ENCODE measurements at regions of chr5 and their contacts with region 1.

Region 1: DNA sequence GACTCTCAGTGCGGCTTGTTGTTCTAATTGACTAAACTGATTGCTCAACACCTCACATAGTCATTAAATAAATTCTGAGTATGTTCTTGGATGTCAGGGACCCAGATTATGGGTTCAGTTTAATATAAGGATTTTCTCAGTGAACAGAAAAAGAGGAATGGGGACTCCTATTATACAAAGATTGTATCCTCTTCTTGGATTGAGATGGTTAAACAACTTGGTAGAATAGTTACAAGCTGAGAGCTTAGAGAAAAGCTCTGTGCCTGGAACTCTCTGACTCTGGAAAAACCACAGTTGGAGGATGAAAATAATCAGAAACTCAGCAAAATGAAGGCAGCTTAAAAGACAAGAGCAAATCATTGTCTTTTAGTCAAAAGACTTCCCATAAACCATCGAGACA is 30.5 kb downstream of the ANKRA2 start:
- DNase-seq: no peak
- H3K4me3 ChIP-seq: no peak overlapping the region
- H3K27ac ChIP-seq: no peak overlapping the region
- H3K4me1 ChIP-seq: no peaks in the 10 kb centered on the region
- CTCF ChIP-seq: no peak

Region 2: DNA sequence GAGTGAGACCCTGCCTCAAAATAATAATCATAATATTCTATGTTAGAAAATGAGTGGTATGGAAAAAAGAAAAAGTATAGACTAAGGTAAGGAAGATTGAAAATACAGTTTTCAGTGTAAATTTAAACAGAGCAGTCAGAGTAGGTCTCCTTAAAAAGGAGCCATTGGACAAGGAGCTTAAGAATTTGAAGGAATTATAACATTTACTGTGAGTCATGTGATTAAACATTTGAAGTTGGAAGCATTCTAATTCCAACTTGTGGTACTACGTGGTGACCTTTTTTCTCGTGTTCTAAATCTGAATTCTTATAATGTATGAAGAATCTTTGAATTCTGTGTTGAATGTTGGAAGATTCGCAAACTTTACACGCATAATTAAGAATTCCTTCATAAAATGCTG is 453.9 kb before region 1 on chr5:
- CTCF ChIA-PET with region 1: no interaction called
- POLR2A ChIA-PET with region 1: no interaction called
- intact Hi-C with region 1: loop called (anchors 5 kb)
- DNase-seq: no peak
- H3K4me3 ChIP-seq: no peak overlapping the region
- H3K27ac ChIP-seq: no peak overlapping the region
- H3K4me1 ChIP-seq: no peaks in the 10 kb centered on the region
- CTCF ChIP-seq: no peak

Region 3: DNA sequence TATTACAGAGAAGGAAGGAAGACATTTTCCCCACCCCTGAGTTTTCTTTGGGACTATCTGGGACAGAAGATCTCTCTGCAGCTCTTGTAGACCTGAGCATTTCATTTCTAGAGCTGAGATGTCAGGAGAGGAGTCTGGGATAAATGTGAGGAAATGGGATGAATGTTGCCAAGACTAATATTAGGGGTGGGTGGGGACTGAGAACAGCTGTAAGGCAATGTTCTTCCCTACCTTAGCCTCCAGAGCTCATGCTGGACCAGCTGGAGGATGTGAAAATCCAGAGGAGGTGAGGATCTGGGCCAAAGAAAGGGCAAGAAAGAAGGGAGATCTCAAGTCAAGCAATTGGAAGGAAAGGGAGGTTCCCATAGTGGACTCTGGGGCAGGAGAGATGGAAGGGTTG is 63.3 kb before region 1 on chr5:
- CTCF ChIA-PET with region 1: no interaction called
- POLR2A ChIA-PET with region 1: no interaction called
- intact Hi-C with region 1: no loop called
- DNase-seq: no peak
- H3K4me3 ChIP-seq: no peak overlapping the region
- H3K27ac ChIP-seq: no peak overlapping the region
- H3K4me1 ChIP-seq: no peaks in the 10 kb centered on the region
- CTCF ChIP-seq: no peak